ENCODE measurements at regions of chr14 and their contacts with region 1.

Region 1: GRCh38 chr14:71320107-71320733 is 413.0 kb downstream of the PCNX1 start:
- DNase-seq: peak; percentile 92 to 95 (median 94)
- ATAC-seq: peak; percentile 92
- H3K4me3 ChIP-seq: peak within 1 kb of the TSS; percentile 81
- H3K27ac ChIP-seq: peak within 1 kb of the TSS; percentile 85
- H3K4me1 ChIP-seq: peaks cover 6 to 7% of the 10 kb centered on the region in 2 experiments
- H3K27me3 ChIP-seq: no peaks in the 10 kb centered on the region
- CTCF ChIP-seq: 0 out of 6 replicates have a peak, but pooled peaks of 1 of the 3 experiments have one; percentile 3
- EP300 ChIP-seq: no peak
- POLR2A ChIP-seq: peak; percentile 80
- RAD21 ChIP-seq: no peak

Region 2: DNA sequence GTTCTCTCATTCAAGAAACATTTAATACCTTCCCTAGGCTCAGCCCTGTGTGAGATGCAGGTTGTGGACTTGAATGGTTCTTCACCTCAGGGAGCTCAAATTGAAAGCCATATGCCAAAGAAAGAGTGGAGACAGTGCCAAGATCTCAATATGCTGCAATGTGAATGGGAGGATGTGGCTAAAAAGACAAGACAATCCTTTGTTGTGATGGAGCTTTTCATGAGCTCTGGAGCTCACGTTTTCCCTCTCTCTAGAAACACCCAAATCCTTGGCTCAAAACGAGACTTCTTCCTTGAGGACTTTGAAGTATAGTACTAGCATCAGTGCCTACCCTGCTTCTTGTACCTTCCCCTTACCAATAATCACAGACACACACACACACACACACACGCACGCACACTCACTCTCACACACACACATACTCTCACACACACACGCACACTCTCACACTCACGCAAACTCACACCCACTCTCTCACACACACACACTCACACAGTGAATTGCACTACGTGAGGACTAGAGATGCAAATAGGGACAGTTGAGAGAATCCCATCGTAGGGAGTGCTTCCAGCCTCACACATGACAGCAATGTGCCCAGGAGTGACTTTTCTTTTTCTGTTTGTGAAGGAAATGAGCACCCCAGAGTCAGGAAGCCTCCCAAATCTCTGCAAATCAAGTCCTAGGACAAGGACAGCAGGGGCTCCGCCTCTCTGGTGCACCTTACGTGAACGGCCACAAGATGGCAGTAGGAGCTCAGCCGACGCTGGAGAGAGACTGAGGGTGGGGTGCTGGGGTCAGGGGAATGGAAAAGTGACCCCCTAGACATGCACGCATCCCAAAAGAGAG is 181.5 kb before region 1 on chr14:
- CTCF ChIA-PET with region 1: no interaction called
- POLR2A ChIA-PET with region 1: no interaction called
- in situ Hi-C with region 1: no loop called
- intact Hi-C with region 1: loop called (anchors 5 kb)
- DNase-seq: peak; percentile 60 to 71 (median 66)
- ATAC-seq: peak; percentile 93
- H3K4me3 ChIP-seq: no peak overlapping the region
- H3K27ac ChIP-seq: no peak overlapping the region
- H3K4me1 ChIP-seq: peaks cover 0 to 8% of the 10 kb centered on the region in 2 experiments; a peak in 4 of 5 replicates
- H3K27me3 ChIP-seq: no peaks in the 10 kb centered on the region
- CTCF ChIP-seq: peak; percentile 70 to 80 (median 71)
- EP300 ChIP-seq: no peak
- POLR2A ChIP-seq: no peak
- RAD21 ChIP-seq: peak; percentile 71 to 87

Region 3: GRCh38 chr14:71362920-71363584 is 42.8 kb after region 1 on chr14:
- CTCF ChIA-PET with region 1: no interaction called
- POLR2A ChIA-PET with region 1: interaction called, 3 read pairs
- in situ Hi-C with region 1: no loop called
- intact Hi-C with region 1: loop called (anchors 5 kb)
- DNase-seq: no peak
- ATAC-seq: no peak
- H3K4me3 ChIP-seq: no peak overlapping the region
- H3K27ac ChIP-seq: peak overlapping the region; percentile 93; the same call in 2 of the 3 replicates
- H3K4me1 ChIP-seq: peaks cover 6 to 40% of the 10 kb centered on the region in 2 experiments; a peak in 4 of 5 replicates
- H3K27me3 ChIP-seq: no peaks in the 10 kb centered on the region
- CTCF ChIP-seq: no peak
- EP300 ChIP-seq: 0 out of 2 replicates have a peak, but pooled peaks have one; percentile 9
- POLR2A ChIP-seq: no peak
- RAD21 ChIP-seq: no peak

Region 4: DNA sequence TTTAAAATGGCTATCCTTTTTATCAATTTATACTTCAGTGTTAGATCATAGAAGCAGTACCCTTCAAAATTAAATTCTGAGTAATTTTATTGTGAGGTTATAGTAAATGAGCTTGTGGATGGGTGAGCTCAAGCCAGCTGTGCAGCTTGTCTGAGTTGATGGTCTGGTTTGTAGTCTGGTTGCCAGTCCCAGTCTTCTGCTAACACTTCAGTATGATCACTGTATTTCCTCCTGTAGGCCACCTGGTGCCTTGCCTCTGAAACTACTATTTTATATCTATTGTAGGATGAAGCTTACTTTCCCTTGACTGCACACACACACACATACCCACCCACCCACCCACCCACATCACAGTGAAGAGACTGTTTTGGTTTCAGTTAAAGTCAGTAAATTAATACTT is 83.4 kb after region 1 on chr14:
- CTCF ChIA-PET with region 1: no interaction called
- POLR2A ChIA-PET with region 1: interaction called, 3 read pairs
- in situ Hi-C with region 1: no loop called
- intact Hi-C with region 1: loop called (anchors 5 kb)
- DNase-seq: peak in 1 of 4 experiments; percentile 19
- ATAC-seq: peak; percentile 62; the same call in 2 of the 3 replicates
- H3K4me3 ChIP-seq: no peak overlapping the region
- H3K27ac ChIP-seq: no peak overlapping the region
- H3K4me1 ChIP-seq: no peaks in the 10 kb centered on the region
- H3K27me3 ChIP-seq: no peaks in the 10 kb centered on the region
- CTCF ChIP-seq: peak in 1 of 3 experiments; percentile 20; a peak in 2 of 6 replicates
- EP300 ChIP-seq: no peak
- POLR2A ChIP-seq: no peak
- RAD21 ChIP-seq: peak in 1 of 2 experiments; percentile 20; a peak in 1 of 4 replicates

Region 5: GRCh38 chr14:71474301-71475265 is 154.4 kb after region 1 on chr14:
- CTCF ChIA-PET with region 1: no interaction called
- POLR2A ChIA-PET with region 1: no interaction called
- in situ Hi-C with region 1: no loop called
- intact Hi-C with region 1: no loop called
- DNase-seq: no peak
- ATAC-seq: no peak
- H3K4me3 ChIP-seq: no peak overlapping the region
- H3K27ac ChIP-seq: no peak overlapping the region
- H3K4me1 ChIP-seq: peaks cover 0 to 5% of the 10 kb centered on the region in 2 experiments; a peak in 2 of 5 replicates
- H3K27me3 ChIP-seq: no peaks in the 10 kb centered on the region
- CTCF ChIP-seq: no peak
- EP300 ChIP-seq: no peak
- POLR2A ChIP-seq: no peak
- RAD21 ChIP-seq: no peak

Region 6: GRCh38 chr14:71488703-71489191 is 168.5 kb after region 1 on chr14:
- CTCF ChIA-PET with region 1: no interaction called
- POLR2A ChIA-PET with region 1: no interaction called
- in situ Hi-C with region 1: no loop called
- intact Hi-C with region 1: loop called (anchors 10 kb)
- DNase-seq: no peak
- ATAC-seq: no peak
- H3K4me3 ChIP-seq: no peak overlapping the region
- H3K27ac ChIP-seq: no peak overlapping the region
- H3K4me1 ChIP-seq: peaks cover 0 to 6% of the 10 kb centered on the region in 2 experiments; a peak in 3 of 5 replicates
- H3K27me3 ChIP-seq: no peaks in the 10 kb centered on the region
- CTCF ChIP-seq: no peak
- EP300 ChIP-seq: no peak
- POLR2A ChIP-seq: no peak
- RAD21 ChIP-seq: no peak